Gastrocnemius medialis (tissue), 4 donors: ENCODE measurements at regions of chr5 and their contacts with region 1.

Region 1: DNA sequence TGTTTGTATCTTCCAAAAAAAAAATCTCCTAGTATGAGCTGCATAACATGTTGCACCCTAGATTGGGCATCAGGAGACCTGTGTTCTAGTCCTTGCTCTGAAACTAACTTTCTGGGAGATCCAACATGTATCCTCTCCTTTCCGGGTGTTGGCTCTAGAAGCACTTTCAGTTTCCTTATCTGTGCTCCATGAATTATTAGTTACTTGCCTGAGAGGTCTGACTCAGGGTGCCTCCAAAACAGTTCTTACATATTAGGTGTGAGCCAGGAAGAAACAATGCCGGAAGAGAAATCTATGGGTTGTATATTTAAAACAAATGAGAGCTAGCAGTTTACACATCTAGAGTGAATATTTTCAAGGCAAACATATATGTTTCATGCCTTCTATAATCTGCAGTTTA is 36.7 kb upstream of the SLC36A2 start:
- DNase-seq: no peak
- ATAC-seq: peak; percentile 8 to 40
- H3K4me3 ChIP-seq: peak overlapping the region in 3 of 4 donors; percentile 26 to 33 (median 28)
- H3K27ac ChIP-seq: peak overlapping the region; percentile 93 to 97 (median 96)
- H3K4me1 ChIP-seq: peaks cover 26% of the 10 kb centered on the region in 2 donors
- H3K27me3 ChIP-seq: no peaks in the 10 kb centered on the region
- CTCF ChIP-seq: no peak
- POLR2A ChIP-seq: no peak

Region 2: GRCh38 chr5:151345808-151346478 is 38.2 kb before region 1 on chr5:
- in situ Hi-C with region 1: no loop called
- intact Hi-C with region 1: loop called (anchors 1 kb)
- DNase-seq: peak; percentile 63 to 79
- ATAC-seq: peak; percentile 57 to 60
- H3K4me3 ChIP-seq: peak overlapping the region; percentile 50 to 63 (median 54)
- H3K27ac ChIP-seq: peak overlapping the region; percentile 92 to 96 (median 94)
- H3K4me1 ChIP-seq: peaks cover 49 to 50% of the 10 kb centered on the region in 2 donors
- H3K27me3 ChIP-seq: no peaks in the 10 kb centered on the region
- CTCF ChIP-seq: no peak
- POLR2A ChIP-seq: no peak

Region 3: GRCh38 chr5:151432210-151432609 is 48.1 kb after region 1 on chr5:
- in situ Hi-C with region 1: no loop called
- intact Hi-C with region 1: loop called (anchors 1 kb)
- DNase-seq: no peak
- ATAC-seq: no peak
- H3K4me3 ChIP-seq: peak overlapping the region in 1 of 4 donors; percentile 18
- H3K27ac ChIP-seq: peak overlapping the region; percentile 77 to 87 (median 84)
- H3K4me1 ChIP-seq: peaks cover 32 to 37% of the 10 kb centered on the region in 2 donors
- H3K27me3 ChIP-seq: no peaks in the 10 kb centered on the region
- CTCF ChIP-seq: no peak
- POLR2A ChIP-seq: no peak

Region 4: GRCh38 chr5:151454166-151454565 is 70.1 kb after region 1 on chr5:
- in situ Hi-C with region 1: no loop called
- intact Hi-C with region 1: loop called (anchors 2 kb)
- DNase-seq: peak; percentile 77 to 86
- ATAC-seq: peak; percentile 93 to 97
- H3K4me3 ChIP-seq: no peak overlapping the region
- H3K27ac ChIP-seq: peak overlapping the region; percentile 83 to 90 (median 88)
- H3K4me1 ChIP-seq: peaks cover 44 to 48% of the 10 kb centered on the region in 2 donors
- H3K27me3 ChIP-seq: no peaks in the 10 kb centered on the region
- CTCF ChIP-seq: no peak
- POLR2A ChIP-seq: peak in 1 of 2 donors; percentile 20

Region 5: DNA sequence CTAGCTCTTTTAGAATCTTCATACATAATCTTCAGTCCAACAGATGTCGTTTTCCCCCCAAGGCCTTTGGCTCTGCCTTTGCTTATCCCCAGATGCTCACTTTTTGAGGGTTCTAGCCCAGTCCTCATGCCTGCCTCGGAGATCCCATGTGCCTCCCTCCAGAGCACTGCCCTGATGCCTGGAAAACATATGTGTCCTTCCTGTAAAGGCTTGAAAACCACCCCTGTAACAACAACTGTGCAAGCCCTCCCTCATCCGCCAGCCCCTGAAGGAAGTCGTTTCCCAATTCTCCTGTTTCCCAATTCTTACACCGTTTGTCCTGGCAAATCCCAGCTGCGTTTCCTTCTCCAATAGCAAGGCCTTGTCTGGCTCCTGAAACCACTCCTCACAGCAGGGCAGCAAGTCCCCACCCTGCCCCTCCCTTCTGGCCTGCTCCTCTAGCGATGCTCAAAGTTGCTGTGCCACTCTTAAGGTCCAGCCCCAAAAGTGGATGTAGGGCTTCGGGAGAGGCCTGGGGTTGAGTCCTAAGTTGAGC is 115.5 kb after region 1 on chr5:
- in situ Hi-C with region 1: no loop called
- intact Hi-C with region 1: loop called (anchors 1 kb)
- DNase-seq: no peak
- ATAC-seq: peak in 1 of 2 donors; percentile 25
- H3K4me3 ChIP-seq: no peak overlapping the region
- H3K27ac ChIP-seq: no peak overlapping the region
- H3K4me1 ChIP-seq: no peaks in the 10 kb centered on the region
- H3K27me3 ChIP-seq: no peaks in the 10 kb centered on the region
- CTCF ChIP-seq: no peak
- POLR2A ChIP-seq: no peak